Activated B cell treated with CpG ODN at 0.5 μM for 24 hours (primary cell): ENCODE measurements at regions of chr9 and their contacts with region 1.

Region 1: DNA sequence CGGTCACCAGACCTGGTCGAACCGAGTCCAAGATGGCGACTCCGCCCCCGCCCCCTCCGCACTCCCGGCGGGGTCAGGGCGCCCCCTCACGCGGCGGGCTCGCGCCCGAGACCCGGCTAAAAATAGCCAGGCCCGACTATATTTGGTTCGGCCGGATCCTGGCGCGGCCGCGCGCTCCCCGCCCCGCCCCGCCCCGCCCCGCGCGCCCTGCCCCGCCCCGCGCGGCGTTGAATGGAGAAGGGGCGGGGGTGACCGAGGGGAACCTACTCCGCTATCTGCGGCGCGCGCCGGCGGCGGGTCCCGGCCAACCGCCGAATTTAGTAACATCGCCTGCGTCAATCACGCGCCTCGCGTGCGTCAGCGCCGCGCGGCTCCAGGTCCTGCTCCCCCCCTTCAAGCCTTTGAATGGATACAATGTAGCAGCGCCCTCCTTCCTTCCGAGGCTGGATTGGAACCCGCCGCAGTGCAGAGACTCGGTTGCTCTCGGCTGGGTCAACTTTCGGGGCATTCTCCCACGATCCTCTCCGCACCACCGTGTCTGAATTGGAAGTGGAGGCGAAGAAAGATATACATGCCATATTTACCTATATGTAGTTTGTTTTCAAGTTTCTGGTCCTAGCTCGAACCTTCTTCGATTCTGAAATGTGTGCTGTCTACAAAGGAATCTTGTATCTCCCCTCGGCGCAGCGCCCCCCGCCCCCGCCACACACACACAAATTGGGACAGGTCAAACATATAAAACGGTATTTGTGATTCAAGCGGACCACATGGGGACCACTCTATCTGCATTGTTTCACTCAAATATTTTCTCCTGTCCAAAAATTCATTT is 1.6 kb upstream of the NR4A3 start:
- DNase-seq: no peak
- ATAC-seq: peak; percentile 53
- H3K4me3 Mint-ChIP-seq: peak overlapping the region; percentile 96
- H3K27ac Mint-ChIP-seq: peak overlapping the region; percentile 97
- H3K4me1 Mint-ChIP-seq: peaks cover 42% of the 10 kb centered on the region
- H3K27me3 Mint-ChIP-seq: no peaks in the 10 kb centered on the region
- CTCF ChIP-seq: no peak

Region 2: DNA sequence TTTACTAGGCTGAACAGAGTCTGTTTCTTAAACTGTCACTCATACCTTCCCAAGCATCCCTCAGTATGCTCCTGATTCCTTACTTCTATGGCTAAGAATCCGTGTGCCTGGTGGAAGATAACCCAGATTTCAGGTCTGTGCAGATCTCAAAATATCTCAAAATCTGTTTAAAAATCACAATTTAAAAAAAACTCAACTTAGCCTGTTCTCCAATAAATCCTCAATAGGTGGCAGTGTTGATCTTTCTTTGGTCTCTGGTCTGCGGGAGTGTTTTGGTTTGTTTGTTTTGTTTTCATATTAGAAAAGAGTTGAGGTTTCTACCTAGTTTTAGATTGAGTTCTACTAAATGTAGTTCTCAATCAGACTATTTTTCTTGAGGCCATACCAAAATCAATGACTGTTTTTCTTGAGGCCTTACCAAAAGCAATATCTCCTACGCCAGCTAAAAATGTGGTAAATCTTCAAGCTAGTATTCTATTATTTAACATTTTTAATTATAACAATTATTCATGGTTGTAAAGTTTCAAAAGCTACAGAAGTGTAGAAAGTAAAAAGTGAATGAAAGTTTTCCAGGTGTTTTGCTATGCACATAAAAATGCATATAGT is 657.2 kb before region 1 on chr9:
- CTCF ChIA-PET with region 1: interaction called, 4 read pairs
- POLR2A ChIA-PET with region 1: interaction called, 5 read pairs
- intact Hi-C with region 1: loop called (anchors 5 kb)
- DNase-seq: no peak
- ATAC-seq: peak; percentile 55
- H3K4me3 Mint-ChIP-seq: no peak overlapping the region
- H3K27ac Mint-ChIP-seq: peak overlapping the region; percentile 66
- H3K4me1 Mint-ChIP-seq: peaks cover 45% of the 10 kb centered on the region
- H3K27me3 Mint-ChIP-seq: no peaks in the 10 kb centered on the region
- CTCF ChIP-seq: peak; percentile 22

Region 3: GRCh38 chr9:99253772-99254431 is 566.2 kb before region 1 on chr9:
- CTCF ChIA-PET with region 1: no interaction called
- POLR2A ChIA-PET with region 1: interaction called, 25 read pairs
- intact Hi-C with region 1: loop called (anchors 1 kb)
- DNase-seq: peak; percentile 73
- ATAC-seq: peak; percentile 87
- H3K4me3 Mint-ChIP-seq: peak overlapping the region; percentile 59
- H3K27ac Mint-ChIP-seq: peak overlapping the region; percentile 94
- H3K4me1 Mint-ChIP-seq: peaks cover 49% of the 10 kb centered on the region
- H3K27me3 Mint-ChIP-seq: no peaks in the 10 kb centered on the region
- CTCF ChIP-seq: no peak

Region 4: GRCh38 chr9:99595796-99596195 is 224.3 kb before region 1 on chr9:
- CTCF ChIA-PET with region 1: no interaction called
- POLR2A ChIA-PET with region 1: interaction called, 3 read pairs
- intact Hi-C with region 1: loop called (anchors 1 kb)
- DNase-seq: no peak
- ATAC-seq: peak; percentile 78
- H3K4me3 Mint-ChIP-seq: peak overlapping the region; percentile 21
- H3K27ac Mint-ChIP-seq: peak overlapping the region; percentile 85
- H3K4me1 Mint-ChIP-seq: peaks cover 54% of the 10 kb centered on the region
- H3K27me3 Mint-ChIP-seq: no peaks in the 10 kb centered on the region
- CTCF ChIP-seq: no peak

Region 5: DNA sequence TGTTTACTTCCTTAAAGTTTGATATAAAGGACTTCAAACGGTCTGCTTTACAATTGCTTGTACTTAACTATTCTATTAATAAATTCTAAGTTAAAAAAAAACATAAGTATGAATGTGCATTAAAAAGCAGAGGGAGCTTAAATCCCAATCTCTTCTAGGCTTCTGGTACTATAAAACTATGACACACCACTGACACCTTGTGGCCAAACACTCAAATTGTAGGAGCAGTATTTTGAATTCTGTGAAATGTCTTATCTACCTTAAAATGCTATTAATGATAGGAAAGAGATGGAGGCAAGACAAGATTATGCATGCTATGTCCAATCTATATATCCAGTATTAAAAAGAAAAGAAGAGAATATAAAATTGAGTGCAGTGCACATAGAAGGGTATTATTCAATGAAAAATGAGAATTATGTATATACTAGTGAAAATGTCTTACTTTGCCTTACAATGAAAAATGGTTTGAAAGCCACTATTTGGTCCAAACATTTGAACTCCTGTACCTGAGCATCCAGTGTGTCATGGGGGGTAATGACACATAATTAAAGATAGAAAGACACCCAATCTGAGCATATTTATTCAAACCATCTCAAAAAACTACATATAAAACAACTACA is 191.1 kb after region 1 on chr9:
- CTCF ChIA-PET with region 1: no interaction called
- POLR2A ChIA-PET with region 1: interaction called, 3 read pairs
- intact Hi-C with region 1: loop called (anchors 5 kb)
- DNase-seq: no peak
- ATAC-seq: peak; percentile 62
- H3K4me3 Mint-ChIP-seq: no peak overlapping the region
- H3K27ac Mint-ChIP-seq: no peak overlapping the region
- H3K4me1 Mint-ChIP-seq: no peaks in the 10 kb centered on the region
- H3K27me3 Mint-ChIP-seq: no peaks in the 10 kb centered on the region
- CTCF ChIP-seq: no peak

Region 6: DNA sequence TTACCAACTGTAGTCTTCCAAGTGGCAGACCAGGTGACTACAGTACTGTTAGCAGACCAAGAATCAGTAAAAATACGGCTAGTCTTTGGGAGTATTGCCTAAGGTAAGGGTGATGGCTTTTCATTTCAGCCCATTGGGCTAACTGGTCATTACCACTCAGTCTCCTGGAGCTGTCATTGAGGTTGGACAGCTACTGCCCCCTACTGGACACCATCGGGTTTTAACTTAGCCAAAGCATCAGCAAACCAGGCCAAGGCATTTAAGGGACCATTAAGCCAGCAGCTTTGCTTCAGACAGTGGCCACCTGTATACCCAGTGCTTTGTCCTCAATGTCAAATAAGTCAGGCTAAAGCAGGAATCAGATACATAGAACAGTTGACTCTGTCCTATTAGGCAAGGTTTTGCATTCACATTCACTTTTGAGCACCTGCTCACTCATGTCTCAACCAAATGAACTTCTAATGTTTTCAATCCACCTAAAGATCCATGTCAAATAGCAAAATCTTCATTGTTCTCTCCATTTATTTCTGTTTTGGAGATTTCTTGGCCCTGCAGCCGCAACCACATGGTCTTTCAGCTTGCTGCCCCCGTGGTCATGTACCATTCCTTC is 396.2 kb after region 1 on chr9:
- CTCF ChIA-PET with region 1: interaction called, 4 read pairs
- POLR2A ChIA-PET with region 1: no interaction called
- intact Hi-C with region 1: loop called (anchors 5 kb)
- DNase-seq: peak; percentile 37
- ATAC-seq: peak; percentile 87
- H3K4me3 Mint-ChIP-seq: no peak overlapping the region
- H3K27ac Mint-ChIP-seq: no peak overlapping the region
- H3K4me1 Mint-ChIP-seq: no peaks in the 10 kb centered on the region
- H3K27me3 Mint-ChIP-seq: no peaks in the 10 kb centered on the region
- CTCF ChIP-seq: no peak

Region 7: DNA sequence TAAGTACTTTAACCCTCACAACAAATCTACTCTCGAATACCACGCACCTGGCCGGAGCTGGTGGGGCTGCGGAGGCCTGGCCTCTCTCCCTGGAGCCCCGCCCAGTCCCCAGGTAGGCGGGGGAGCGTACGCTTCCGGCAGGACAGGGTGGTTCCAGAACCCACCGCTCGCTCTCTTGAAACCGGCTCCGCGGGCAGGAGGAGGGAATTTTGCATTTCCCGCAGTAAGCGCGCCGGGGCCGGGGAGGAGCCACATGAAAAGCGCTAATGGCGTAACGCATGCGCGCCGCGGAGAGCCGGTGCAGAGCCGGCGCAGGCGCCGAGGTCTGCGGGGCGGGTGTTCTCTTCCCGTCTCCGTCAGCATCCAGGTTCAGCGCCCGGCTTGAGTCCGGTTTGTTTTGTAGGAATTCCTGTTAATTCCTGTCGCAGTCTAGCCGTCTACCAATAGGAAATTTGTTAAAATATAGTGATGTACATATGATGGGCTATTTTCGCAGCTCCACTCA is 778.6 kb after region 1 on chr9:
- CTCF ChIA-PET with region 1: no interaction called
- POLR2A ChIA-PET with region 1: no interaction called
- intact Hi-C with region 1: loop called (anchors 10 kb)
- DNase-seq: peak; percentile 73
- ATAC-seq: peak; percentile 91
- H3K4me3 Mint-ChIP-seq: peak overlapping the region; percentile 81
- H3K27ac Mint-ChIP-seq: no peak overlapping the region
- H3K4me1 Mint-ChIP-seq: peaks cover 18% of the 10 kb centered on the region
- H3K27me3 Mint-ChIP-seq: no peaks in the 10 kb centered on the region
- CTCF ChIP-seq: no peak